Gastrocnemius medialis (tissue), 4 donors: ENCODE measurements at regions of chrX and their contacts with region 1.

Region 1: GRCh38 chrX:68828740-68829552 is at the start of gene EFNB1:
- DNase-seq: peak; percentile 90 to 92
- ATAC-seq: peak; percentile 86 to 88
- H3K4me3 ChIP-seq: peak within 1 kb of the TSS; percentile 72 to 86 (median 75)
- H3K27ac ChIP-seq: peak within 1 kb of the TSS; percentile 81 to 89 (median 86)
- H3K4me1 ChIP-seq: no peaks in the 10 kb centered on the region
- H3K27me3 ChIP-seq: no peaks in the 10 kb centered on the region
- CTCF ChIP-seq: no peak
- POLR2A ChIP-seq: peak; percentile 86 to 97
- total RNA-seq, gene EFNB1: 8.8 to 15.7 (median 13.0) TPM

Region 2: DNA sequence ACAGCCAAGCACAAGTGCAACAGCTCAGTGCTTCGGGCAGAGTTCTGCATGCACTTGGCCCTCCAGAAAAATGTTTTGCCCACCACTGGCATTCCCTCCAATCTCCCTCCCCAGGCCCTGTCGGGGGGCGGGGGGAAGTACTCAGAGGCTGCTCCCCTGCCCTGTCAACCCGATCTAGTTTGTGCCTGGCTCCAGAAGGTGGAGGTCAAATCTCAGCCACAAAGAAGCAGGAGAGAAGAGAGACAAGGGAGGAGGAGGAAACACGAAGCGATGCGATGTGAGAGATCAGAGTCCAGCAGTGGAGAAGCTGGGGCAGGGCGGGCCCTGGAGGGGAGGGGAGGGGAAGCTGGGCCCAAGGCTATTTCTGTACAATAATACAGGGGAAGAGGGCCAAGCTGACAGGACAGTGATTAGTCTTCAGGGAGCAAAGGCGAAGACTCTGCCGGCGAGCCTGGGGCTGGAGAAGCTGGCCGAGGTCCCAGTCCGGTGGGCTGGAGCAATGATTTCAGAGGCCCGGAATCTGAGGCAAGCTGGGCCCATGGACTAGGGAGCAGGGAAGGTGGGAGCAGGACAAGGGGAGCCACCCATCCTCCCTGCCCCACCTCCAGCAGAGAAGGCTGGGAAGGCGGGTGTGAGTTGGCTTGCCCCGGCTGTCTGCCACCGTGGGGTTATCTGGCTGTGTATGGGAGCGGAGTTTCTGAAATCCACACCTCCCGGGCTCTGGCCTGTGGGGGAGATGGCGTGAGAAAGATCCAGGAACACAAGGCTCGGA is 167.0 kb after region 1 on chrX:
- in situ Hi-C with region 1: no loop called
- intact Hi-C with region 1: loop called (anchors 1 kb)
- DNase-seq: peak in 1 of 2 donors; percentile 17
- ATAC-seq: peak; percentile 44 to 71
- H3K4me3 ChIP-seq: peak overlapping the region in 2 of 4 donors; percentile 11 to 22
- H3K27ac ChIP-seq: peak overlapping the region; percentile 52 to 64 (median 59)
- H3K4me1 ChIP-seq: peaks cover 3 to 17% of the 10 kb centered on the region in 2 donors
- H3K27me3 ChIP-seq: no peaks in the 10 kb centered on the region
- CTCF ChIP-seq: no peak
- POLR2A ChIP-seq: no peak

Region 3: DNA sequence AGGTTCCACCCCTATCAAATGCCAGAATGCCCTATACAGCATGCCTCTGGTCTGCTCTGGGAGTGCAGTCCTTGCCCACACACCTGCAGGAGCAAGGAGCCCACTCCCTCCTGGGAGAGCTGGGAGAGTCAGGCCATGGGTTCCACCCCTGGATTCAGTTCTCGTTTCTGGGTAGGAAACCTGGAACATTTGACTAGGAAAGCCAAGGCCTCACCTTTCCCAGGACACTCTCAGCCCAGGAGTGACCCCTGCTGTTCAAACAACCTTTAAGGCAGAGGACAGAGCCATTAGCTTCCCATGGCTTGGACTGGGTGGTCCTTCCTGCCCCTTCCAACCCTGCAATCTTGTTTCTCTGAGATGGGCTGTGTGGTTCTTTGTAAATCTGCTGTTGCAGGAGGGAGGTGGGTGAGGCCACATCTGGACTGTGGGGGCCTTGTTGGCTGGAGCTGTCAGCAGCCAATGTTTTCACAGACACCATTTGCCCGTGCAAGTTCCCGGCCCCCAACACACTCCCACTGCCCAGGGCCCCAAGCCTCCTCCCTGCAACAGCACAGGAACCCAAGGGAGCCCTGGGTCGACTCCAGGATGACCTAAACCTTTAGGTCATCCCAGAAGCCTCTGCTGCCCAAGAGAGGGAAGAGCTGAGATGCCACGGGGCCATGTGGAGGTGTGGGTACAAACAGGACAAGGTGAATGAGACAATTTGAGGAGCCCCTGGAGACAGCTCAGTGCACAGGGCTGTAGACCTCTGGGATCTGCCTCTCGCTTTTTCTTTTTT is 231.9 kb after region 1 on chrX:
- in situ Hi-C with region 1: loop called in 1 of 4 experiments (anchors 25 kb)
- intact Hi-C with region 1: loop called (anchors 1 kb)
- DNase-seq: peak in 1 of 2 donors; percentile 14
- ATAC-seq: peak in 1 of 2 donors; percentile 76
- H3K4me3 ChIP-seq: no peak overlapping the region
- H3K27ac ChIP-seq: no peak overlapping the region
- H3K4me1 ChIP-seq: no peaks in the 10 kb centered on the region
- H3K27me3 ChIP-seq: peaks cover 0 to 5% (median 0%) of the 10 kb centered on the region in 3 donors
- CTCF ChIP-seq: peak in 4 of 5 experiments; percentile 11 to 47 (median 36)
- POLR2A ChIP-seq: no peak

Region 4: GRCh38 chrX:69216911-69217310 is 388.0 kb after region 1 on chrX:
- in situ Hi-C with region 1: loop called in 2 of 4 experiments (anchors 5 to 10 kb)
- intact Hi-C with region 1: no loop called
- DNase-seq: no peak
- ATAC-seq: no peak
- H3K4me3 ChIP-seq: no peak overlapping the region
- H3K27ac ChIP-seq: no peak overlapping the region
- H3K4me1 ChIP-seq: no peaks in the 10 kb centered on the region
- H3K27me3 ChIP-seq: peaks cover 0 to under 1% (median 0%) of the 10 kb centered on the region in 3 donors
- CTCF ChIP-seq: no peak
- POLR2A ChIP-seq: no peak

Region 5: DNA sequence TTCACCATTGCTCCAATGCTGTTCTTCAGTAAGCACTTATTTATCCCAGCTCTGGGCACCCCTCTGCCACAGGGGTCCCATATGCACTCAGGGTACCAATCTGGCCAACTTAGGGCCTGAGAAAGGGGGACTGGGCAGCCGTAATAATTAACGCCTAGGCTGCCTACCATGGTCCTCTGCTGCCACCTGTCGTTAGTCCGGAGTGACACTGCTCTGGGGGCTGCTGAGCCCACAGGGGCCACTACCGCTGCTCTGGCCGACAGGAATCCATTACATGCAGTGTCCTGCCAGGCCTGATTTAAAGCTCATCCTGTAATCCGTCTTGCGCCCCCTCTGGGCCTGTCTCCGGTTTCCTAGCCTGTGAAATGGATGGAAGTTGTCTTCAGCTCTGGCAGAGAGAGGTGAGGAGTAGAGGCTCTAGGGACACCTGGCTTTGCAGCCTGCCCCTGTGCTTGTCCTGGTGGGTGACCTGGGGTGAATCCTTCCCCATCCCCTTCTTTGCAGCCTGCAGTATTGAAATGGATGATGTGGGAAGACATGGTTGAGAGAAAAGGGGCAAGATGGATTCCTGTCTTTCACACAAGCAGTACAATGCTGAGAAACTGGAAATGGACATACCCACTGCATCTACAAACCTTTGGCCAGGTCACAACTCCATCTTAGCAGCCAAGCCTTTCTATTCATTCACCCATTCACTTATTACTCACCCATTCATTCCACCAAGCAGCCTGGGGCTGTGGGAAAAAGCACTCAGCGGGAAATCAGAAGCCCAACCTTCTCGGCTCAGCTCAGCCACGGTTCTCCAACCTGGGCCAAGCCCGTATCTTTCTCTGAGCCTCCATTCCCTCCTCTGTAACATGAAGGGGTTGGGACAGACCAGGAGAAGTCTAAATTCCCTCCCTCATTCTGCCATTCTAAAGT is 558.9 kb after region 1 on chrX:
- in situ Hi-C with region 1: no loop called
- intact Hi-C with region 1: loop called (anchors 10 kb)
- DNase-seq: peak in 1 of 2 donors; percentile 12
- ATAC-seq: no peak
- H3K4me3 ChIP-seq: no peak overlapping the region
- H3K27ac ChIP-seq: no peak overlapping the region
- H3K4me1 ChIP-seq: no peaks in the 10 kb centered on the region
- H3K27me3 ChIP-seq: peaks cover 0 to 8% (median 0%) of the 10 kb centered on the region in 3 donors
- CTCF ChIP-seq: peak; percentile 20 to 63 (median 45)
- POLR2A ChIP-seq: no peak